PC-3 (cell line): ENCODE measurements at regions of chr2 and their contacts with region 1.

Region 1: GRCh38 chr2:188788621-188789020 is 185.6 kb upstream of the COL3A1 start:
- DNase-seq: peak; percentile 76
- ATAC-seq: peak; percentile 75
- H3K4me3 ChIP-seq: no peak overlapping the region
- H3K27ac ChIP-seq: no peak overlapping the region
- H3K4me1 ChIP-seq: peaks cover 40% of the 10 kb centered on the region
- H3K27me3 ChIP-seq: no peaks in the 10 kb centered on the region
- CTCF ChIP-seq: no peak

Region 2: GRCh38 chr2:188551671-188552070 is 236.9 kb before region 1 on chr2:
- CTCF ChIA-PET with region 1: no interaction called
- POLR2A ChIA-PET with region 1: no interaction called
- intact Hi-C with region 1: loop called (anchors 10 kb)
- DNase-seq: no peak
- ATAC-seq: no peak
- H3K4me3 ChIP-seq: no peak overlapping the region
- H3K27ac ChIP-seq: no peak overlapping the region
- H3K4me1 ChIP-seq: no peaks in the 10 kb centered on the region
- H3K27me3 ChIP-seq: no peaks in the 10 kb centered on the region
- CTCF ChIP-seq: no peak

Region 3: DNA sequence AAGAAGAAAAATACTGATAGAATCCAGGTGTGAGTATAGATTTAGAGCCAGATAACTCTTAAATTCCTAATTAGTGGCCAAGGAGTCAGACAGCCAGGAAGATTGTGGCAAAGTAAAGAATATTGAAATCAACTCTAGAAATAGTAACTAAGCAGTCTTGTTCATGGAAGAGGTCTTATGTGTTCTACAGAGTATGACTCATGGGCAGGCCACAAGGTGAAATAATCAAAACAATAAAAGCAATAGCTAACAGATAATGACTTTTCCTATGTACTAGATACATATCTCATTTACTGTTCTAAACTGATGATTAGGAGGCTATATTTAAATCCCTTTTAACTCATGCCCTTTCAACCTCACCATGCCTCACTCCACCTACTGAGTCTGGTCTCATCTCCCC is 41.9 kb before region 1 on chr2:
- CTCF ChIA-PET with region 1: no interaction called
- POLR2A ChIA-PET with region 1: no interaction called
- intact Hi-C with region 1: no loop called
- DNase-seq: peak; percentile 4
- ATAC-seq: peak; percentile 59
- H3K4me3 ChIP-seq: no peak overlapping the region
- H3K27ac ChIP-seq: no peak overlapping the region
- H3K4me1 ChIP-seq: peaks cover 18% of the 10 kb centered on the region; the same call in 1 of the 2 replicates
- H3K27me3 ChIP-seq: no peaks in the 10 kb centered on the region
- CTCF ChIP-seq: no peak